GM13976 (cell line): ENCODE measurements at regions of chr20 and their contacts with region 1.

Region 1: GRCh38 chr20:51372176-51372803 is 170.2 kb downstream of the NFATC2 start:
- DNase-seq: peak; percentile 85
- CTCF ChIP-seq: peak; percentile 64

Region 2: GRCh38 chr20:51595058-51595532 is 222.8 kb after region 1 on chr20:
- in situ Hi-C with region 1: loop called (anchors 10 kb)
- DNase-seq: peak; percentile 86
- CTCF ChIP-seq: peak; percentile 89

Region 3: DNA sequence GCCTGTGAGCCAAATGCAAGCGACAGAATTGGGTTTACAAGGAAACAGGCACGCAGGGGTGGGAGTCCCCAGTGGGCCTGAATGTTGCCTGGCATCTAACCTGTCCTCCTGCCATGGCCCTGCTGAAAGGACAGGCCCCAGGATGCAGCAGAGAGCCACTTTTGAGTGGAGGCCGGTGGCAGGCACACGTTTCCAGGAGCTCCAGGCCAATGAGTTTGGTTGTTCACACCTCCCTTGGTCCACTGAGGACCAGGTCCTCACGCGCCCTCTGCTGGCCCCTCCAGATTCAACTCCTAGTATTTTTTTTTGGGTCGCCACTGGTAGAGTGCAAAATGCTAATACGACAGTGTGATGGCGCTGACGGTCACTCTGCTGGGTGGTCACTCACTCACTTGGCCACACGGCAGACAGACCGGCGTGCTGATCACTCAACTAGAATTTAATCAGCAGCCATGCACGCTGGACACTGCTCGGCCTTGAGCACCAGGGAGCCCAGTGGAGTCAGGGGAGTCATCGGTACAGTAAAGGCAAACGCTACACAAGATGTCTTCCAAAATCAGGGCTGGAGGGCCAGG is 252.0 kb after region 1 on chr20:
- in situ Hi-C with region 1: loop called (anchors 10 kb)
- DNase-seq: peak; percentile 88
- CTCF ChIP-seq: peak; percentile 61